ENCODE measurements at regions of chr6 and their contacts with region 1.

Region 1: GRCh38 chr6:144582939-144583613 is 297.9 kb downstream of the UTRN start:
- DNase-seq: peak; percentile 57
- H3K4me3 Mint-ChIP-seq: peak overlapping the region; percentile 67
- H3K27ac Mint-ChIP-seq: peak overlapping the region; percentile 20
- H3K4me1 Mint-ChIP-seq: peaks cover 15% of the 10 kb centered on the region
- H3K27me3 Mint-ChIP-seq: no peaks in the 10 kb centered on the region

Region 2: DNA sequence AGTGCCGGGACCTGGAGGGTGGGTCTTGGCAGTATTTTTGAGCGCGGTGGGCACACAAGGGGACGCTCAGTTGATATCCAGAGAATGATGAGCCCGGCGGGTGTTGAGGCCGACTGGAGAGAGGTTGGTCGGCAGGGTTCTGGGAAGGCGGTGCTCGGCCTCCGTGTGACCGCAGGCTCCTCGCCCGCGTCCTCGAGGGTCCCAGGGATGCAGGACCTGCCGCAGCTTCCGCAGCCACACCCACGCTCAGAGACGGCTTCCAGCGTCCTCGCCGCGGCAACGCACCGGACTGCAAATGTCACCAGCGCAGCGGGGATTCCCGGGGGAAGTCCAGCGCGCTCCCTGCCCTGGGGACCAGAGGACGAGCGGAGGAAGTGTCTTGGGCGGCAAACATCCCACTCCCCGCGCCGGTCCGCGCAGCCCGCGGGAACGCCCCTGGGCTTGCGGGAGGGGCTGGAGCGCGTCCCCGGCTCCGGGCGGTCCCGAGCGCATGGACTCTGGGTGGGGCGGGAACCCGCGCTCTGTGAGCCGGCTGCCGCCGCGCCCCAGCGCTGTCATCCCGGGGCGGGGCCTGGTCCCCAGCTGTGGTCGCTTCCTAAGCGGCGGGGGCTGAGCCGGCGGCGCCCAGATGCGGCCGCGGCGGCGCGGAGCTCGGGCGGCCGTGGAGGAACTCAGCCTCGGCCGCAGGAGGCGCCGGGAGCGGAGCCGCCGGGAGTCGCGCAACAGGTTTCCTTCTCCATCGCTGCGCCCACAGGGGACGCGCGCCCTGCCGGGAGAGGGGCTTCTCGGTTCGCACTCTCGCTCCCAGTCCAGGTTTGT is 433.0 kb before region 1 on chr6 and contains the start of gene STX11:
- CTCF ChIA-PET with region 1: no interaction called
- intact Hi-C with region 1: loop called (anchors 1 kb)
- DNase-seq: peak; percentile 91
- H3K4me3 Mint-ChIP-seq: peak within 1 kb of the TSS; percentile 81
- H3K27ac Mint-ChIP-seq: peak within 1 kb of the TSS; percentile 93
- H3K4me1 Mint-ChIP-seq: peaks cover 40% of the 10 kb centered on the region
- H3K27me3 Mint-ChIP-seq: no peaks in the 10 kb centered on the region
- total RNA-seq, gene STX11: 17.2 to 17.5 TPM

Region 3: GRCh38 chr6:144447472-144447871 is 135.6 kb before region 1 on chr6:
- CTCF ChIA-PET with region 1: no interaction called
- intact Hi-C with region 1: no loop called
- DNase-seq: no peak
- H3K4me3 Mint-ChIP-seq: no peak overlapping the region
- H3K27ac Mint-ChIP-seq: no peak overlapping the region
- H3K4me1 Mint-ChIP-seq: no peaks in the 10 kb centered on the region
- H3K27me3 Mint-ChIP-seq: no peaks in the 10 kb centered on the region

Region 4: GRCh38 chr6:144493035-144493910 is 89.8 kb before region 1 on chr6:
- CTCF ChIA-PET with region 1: no interaction called
- intact Hi-C with region 1: no loop called
- DNase-seq: no peak
- H3K4me3 Mint-ChIP-seq: no peak overlapping the region
- H3K27ac Mint-ChIP-seq: no peak overlapping the region
- H3K4me1 Mint-ChIP-seq: peaks cover 8% of the 10 kb centered on the region
- H3K27me3 Mint-ChIP-seq: no peaks in the 10 kb centered on the region

Region 5: DNA sequence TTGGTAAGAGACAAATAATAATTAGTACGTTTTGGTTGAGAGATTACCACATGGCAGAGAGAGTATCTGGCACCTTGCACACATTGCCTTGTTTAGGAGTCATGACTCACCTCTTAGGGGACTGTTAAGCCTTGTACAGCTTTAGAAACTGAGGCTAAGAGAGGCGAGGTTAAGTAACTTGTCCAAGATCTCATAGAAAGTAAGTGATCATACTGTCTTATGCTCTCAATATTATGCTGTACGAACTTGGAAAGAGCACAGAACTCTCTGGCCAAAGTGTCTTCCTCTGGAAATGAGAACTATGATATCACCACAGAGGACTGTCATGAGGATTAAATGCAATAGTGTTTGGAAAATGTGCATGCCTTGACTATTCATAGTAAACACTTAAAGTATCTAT is 48.9 kb before region 1 on chr6:
- CTCF ChIA-PET with region 1: no interaction called
- intact Hi-C with region 1: no loop called
- DNase-seq: no peak
- H3K4me3 Mint-ChIP-seq: no peak overlapping the region
- H3K27ac Mint-ChIP-seq: no peak overlapping the region
- H3K4me1 Mint-ChIP-seq: peaks cover 2% of the 10 kb centered on the region
- H3K27me3 Mint-ChIP-seq: no peaks in the 10 kb centered on the region

Region 6: GRCh38 chr6:144602523-144603180 is 19.6 kb after region 1 on chr6:
- CTCF ChIA-PET with region 1: interaction called, 4 read pairs
- intact Hi-C with region 1: loop called (anchors 1 kb)
- DNase-seq: peak; percentile 52
- H3K4me3 Mint-ChIP-seq: no peak overlapping the region
- H3K27ac Mint-ChIP-seq: no peak overlapping the region
- H3K4me1 Mint-ChIP-seq: peaks cover 46% of the 10 kb centered on the region
- H3K27me3 Mint-ChIP-seq: no peaks in the 10 kb centered on the region

Region 7: DNA sequence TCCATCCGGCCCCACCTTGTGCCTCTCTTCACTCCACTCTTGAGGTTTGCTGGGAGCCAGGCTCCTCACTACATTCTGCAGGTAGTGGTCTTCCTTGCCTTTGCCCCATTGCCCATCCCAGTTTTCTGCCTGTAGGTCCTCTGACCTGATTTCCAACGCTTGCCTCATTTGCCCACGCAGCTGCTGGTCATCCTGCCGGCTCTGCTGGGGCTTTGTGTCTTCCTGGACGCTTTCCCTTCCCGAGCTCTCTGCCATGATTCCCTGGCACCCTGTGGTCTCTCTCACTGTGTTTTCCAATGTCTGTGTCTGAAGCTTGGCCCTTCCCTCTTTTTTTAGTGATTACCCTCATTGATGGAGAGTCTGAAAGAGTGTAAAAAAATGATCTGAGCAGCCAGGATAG is 153.7 kb after region 1 on chr6:
- CTCF ChIA-PET with region 1: no interaction called
- intact Hi-C with region 1: no loop called
- DNase-seq: no peak
- H3K4me3 Mint-ChIP-seq: no peak overlapping the region
- H3K27ac Mint-ChIP-seq: no peak overlapping the region
- H3K4me1 Mint-ChIP-seq: no peaks in the 10 kb centered on the region
- H3K27me3 Mint-ChIP-seq: no peaks in the 10 kb centered on the region

Region 8: GRCh38 chr6:144931172-144932035 is 348.3 kb after region 1 on chr6:
- CTCF ChIA-PET with region 1: interaction called, 7 read pairs
- intact Hi-C with region 1: loop called (anchors 1 kb)
- DNase-seq: peak; percentile 65
- H3K4me3 Mint-ChIP-seq: no peak overlapping the region
- H3K27ac Mint-ChIP-seq: no peak overlapping the region
- H3K4me1 Mint-ChIP-seq: no peaks in the 10 kb centered on the region
- H3K27me3 Mint-ChIP-seq: no peaks in the 10 kb centered on the region

Region 9: DNA sequence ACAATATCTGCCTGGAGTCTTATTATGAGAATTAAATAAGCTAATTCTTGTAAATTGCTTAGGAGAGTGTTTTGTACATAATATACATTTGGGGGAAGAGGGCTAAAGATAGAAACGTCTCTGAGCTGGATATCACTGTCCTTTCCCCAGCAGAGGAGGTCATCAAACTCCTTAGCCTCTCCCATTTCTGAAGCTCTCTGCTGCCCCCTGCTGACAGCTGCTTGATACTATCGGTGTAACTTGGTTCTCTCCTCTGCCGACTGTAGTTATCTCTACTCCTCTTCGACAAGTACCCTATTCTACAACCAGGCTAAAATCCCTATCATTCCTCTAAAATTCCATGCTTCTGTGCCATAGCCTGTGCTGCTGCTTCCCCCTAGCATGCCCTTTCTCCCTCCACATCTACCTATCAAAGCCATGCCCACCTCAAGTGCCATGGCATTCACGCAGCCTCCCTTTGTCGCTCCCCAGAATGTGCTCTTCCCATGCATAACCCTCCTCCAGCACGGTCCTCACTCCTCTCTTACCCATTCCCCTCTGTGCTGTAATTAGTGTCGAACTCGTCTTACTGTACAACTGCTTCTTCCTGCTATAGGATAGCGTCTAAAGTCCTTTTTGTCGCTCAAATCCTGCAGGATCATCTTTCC is 1051.0 kb after region 1 on chr6:
- CTCF ChIA-PET with region 1: no interaction called
- intact Hi-C with region 1: loop called (anchors 5 kb)
- DNase-seq: peak; percentile 91
- H3K4me3 Mint-ChIP-seq: no peak overlapping the region
- H3K27ac Mint-ChIP-seq: no peak overlapping the region
- H3K4me1 Mint-ChIP-seq: peaks cover 5% of the 10 kb centered on the region
- H3K27me3 Mint-ChIP-seq: no peaks in the 10 kb centered on the region